B cell (primary cell): ENCODE measurements at regions of chr6 and their contacts with region 1.

Region 1: DNA sequence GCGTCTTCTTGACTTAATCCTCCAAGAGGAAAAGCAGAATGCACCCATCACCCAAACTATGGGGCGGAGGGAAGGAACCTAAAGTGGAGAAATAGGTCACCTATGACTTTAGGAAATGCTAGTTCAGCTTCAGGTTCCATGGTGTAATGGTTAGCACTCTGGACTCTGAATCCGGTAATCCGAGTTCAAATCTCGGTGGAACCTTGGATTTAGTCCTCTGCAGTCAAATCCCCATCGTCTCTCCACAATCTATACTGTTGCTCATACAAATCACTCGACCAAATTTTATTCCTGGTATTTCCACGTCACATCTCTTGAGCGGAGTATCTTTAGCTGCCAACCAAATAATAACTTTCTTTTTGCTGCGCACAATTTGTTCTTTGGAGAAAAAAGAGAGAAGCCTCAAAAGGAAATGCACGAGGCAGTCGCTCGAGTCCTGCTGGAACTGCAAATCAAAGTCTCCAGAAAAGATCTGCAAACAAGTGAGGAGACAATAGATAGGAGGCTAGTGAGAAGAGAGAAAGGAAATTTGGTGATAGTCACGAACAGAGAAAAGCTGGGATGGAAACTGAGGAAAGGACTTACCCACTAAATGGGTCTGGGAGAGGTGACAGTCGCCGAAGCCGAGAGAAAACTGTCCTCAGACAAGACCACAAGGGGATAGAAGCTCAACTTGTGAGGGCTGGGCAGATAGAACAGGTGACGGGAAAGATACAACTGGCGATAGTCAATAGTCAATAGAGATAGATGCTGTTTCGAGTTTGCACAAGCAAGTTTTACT is 16.6 kb downstream of the POM121L2 start:
- DNase-seq: no peak
- ATAC-seq: no peak
- H3K4me3 ChIP-seq: no peak overlapping the region
- H3K4me3 Mint-ChIP-seq: no peak overlapping the region
- H3K27ac ChIP-seq: no peak overlapping the region
- H3K27ac Mint-ChIP-seq: peak overlapping the region; percentile 60
- H3K4me1 ChIP-seq: no peaks in the 10 kb centered on the region
- H3K4me1 Mint-ChIP-seq: no peaks in the 10 kb centered on the region
- H3K27me3 ChIP-seq: peaks cover 2 to 73% (median 72%) of the 10 kb centered on the region in 4 experiments
- H3K27me3 Mint-ChIP-seq: peaks cover 87% of the 10 kb centered on the region
- CTCF ChIP-seq: no peak

Region 2: DNA sequence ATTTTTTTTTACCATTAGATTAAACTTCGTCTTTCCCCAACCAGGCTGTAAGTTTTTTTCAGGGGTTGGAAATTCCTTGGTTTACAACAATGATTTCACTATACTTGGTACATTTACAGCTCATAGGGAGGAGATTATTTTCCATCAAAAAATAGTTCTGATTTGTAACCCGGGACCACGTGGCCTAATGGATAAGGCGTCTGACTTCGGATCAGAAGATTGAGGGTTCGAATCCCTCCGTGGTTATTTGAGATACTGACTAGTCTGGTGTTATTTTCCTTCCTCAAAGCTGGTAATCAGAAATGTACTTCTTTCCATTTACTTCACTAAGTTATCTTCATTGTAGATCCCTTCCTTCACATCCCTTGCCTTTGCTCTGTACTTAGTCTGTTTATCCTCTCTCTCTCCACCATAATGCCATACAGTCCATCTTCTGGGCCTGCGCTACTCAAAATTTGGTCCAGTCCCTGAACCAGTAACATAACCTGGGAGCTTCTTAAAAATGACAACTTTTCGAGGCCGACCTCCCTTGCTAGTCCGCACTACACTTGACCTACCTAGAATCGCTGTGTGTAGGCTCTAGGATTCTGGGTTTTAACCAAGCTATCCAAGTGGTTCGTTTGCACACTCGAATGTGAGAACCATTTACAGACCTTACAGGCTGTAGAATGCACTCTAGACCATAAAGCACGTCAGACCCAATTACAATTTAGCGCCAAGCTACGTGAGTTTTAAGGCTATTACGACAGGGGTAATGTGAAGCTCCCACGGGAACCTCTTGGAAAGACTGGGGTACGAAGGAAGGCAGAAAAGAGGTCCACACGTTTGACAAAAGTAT is 972.6 kb before region 1 on chr6:
- CTCF ChIA-PET with region 1: no interaction called
- POLR2A ChIA-PET with region 1: no interaction called
- intact Hi-C with region 1: loop called (anchors 10 kb)
- DNase-seq: peak; percentile 83
- ATAC-seq: peak; percentile 59
- H3K4me3 ChIP-seq: peak overlapping the region in 4 of 5 experiments; percentile 49 to 74 (median 59)
- H3K4me3 Mint-ChIP-seq: peak overlapping the region; percentile 74
- H3K27ac ChIP-seq: no peak overlapping the region
- H3K27ac Mint-ChIP-seq: peak overlapping the region; percentile 70
- H3K4me1 ChIP-seq: peaks cover 14 to 31% of the 10 kb centered on the region in 2 donors
- H3K4me1 Mint-ChIP-seq: peaks cover 22% of the 10 kb centered on the region
- H3K27me3 ChIP-seq: peaks cover 0 to 43% (median 25%) of the 10 kb centered on the region in 4 experiments
- H3K27me3 Mint-ChIP-seq: peaks cover 26% of the 10 kb centered on the region
- CTCF ChIP-seq: no peak

Region 3: GRCh38 chr6:27553123-27553904 is 257.8 kb after region 1 on chr6:
- CTCF ChIA-PET with region 1: no interaction called
- POLR2A ChIA-PET with region 1: no interaction called
- intact Hi-C with region 1: loop called (anchors 5 kb)
- DNase-seq: peak; percentile 36
- ATAC-seq: no peak
- H3K4me3 ChIP-seq: no peak overlapping the region
- H3K4me3 Mint-ChIP-seq: peak overlapping the region; percentile 54
- H3K27ac ChIP-seq: no peak overlapping the region
- H3K27ac Mint-ChIP-seq: no peak overlapping the region
- H3K4me1 ChIP-seq: peaks cover 3 to 15% of the 10 kb centered on the region in 2 donors
- H3K4me1 Mint-ChIP-seq: peaks cover 10% of the 10 kb centered on the region
- H3K27me3 ChIP-seq: peaks cover 1 to 65% (median 54%) of the 10 kb centered on the region in 4 experiments
- H3K27me3 Mint-ChIP-seq: peaks cover 64% of the 10 kb centered on the region
- CTCF ChIP-seq: no peak

Region 4: DNA sequence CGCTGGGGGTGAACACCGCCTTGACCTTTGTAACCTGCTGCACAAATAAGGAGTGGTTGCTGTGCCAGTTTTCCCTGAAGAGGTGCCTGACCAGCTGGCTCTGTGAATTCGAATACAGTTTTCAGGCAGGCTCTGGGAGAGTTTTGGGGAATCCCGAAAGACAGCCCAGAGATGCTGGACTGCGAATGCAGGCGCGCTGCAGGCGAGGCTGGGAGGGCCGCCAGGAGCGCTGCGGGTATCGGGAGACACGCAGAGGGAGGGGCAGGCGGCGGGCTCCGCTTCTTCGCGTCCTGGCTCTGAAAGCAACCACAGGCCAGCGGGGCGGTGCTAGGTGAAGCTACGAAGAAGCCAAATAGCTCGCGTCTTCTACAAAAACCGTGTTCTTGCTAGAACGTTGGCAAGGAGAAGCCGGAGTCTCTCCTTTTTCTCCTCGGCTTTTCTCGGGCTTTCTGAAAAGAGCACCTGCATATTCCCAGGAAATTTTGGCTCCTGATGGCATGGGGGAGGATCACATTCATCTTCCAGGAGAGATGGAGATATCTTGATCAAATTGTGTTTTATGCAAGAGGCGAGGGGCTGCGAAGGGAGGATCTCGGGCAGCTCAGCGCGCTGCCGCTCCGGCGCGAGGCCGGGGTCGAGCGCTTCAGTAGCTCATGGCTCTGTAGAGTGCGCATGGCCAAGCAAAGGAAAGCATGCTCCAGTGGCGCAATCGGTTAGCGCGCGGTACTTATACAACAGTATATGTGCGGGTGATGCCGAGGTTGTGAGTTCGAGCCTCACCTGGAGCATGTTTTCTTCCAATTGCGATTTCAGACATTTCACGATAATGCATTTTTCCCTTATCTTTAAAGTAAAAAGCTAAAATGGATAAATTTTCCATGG is 335.5 kb after region 1 on chr6:
- CTCF ChIA-PET with region 1: no interaction called
- POLR2A ChIA-PET with region 1: no interaction called
- intact Hi-C with region 1: no loop called
- DNase-seq: no peak
- ATAC-seq: no peak
- H3K4me3 ChIP-seq: no peak overlapping the region
- H3K4me3 Mint-ChIP-seq: peak overlapping the region; percentile 59
- H3K27ac ChIP-seq: no peak overlapping the region
- H3K27ac Mint-ChIP-seq: no peak overlapping the region
- H3K4me1 ChIP-seq: peaks cover 9% of the 10 kb centered on the region in 2 donors
- H3K4me1 Mint-ChIP-seq: peaks cover 6% of the 10 kb centered on the region
- H3K27me3 ChIP-seq: peaks cover 0 to 53% (median 23%) of the 10 kb centered on the region in 4 experiments
- H3K27me3 Mint-ChIP-seq: peaks cover 66% of the 10 kb centered on the region
- CTCF ChIP-seq: no peak

Region 5: DNA sequence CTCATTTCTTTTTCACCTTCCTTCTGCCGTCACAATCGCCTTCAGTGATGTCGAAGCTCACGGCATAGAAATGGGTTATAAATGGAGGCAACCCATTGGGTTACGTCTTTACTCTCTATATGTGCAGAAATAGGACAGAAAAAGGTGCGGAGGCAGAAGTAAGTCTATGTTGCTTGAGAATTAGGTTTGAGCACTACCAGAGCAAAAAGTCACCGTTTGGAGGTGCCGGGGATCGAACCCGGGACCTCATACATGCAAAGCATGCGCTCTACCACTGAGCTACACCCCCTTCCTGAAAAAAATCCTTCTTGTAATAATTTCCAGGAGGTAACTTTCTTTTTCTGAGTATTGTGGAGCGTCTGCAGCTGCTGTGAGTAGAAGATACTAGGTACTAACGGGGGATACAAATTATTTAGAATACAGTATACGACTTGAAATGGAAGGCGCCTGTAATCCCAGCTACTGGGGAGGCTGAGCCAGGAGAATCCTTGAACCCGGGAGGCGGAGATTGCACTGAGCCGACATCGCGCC is 1494.1 kb after region 1 on chr6:
- CTCF ChIA-PET with region 1: no interaction called
- POLR2A ChIA-PET with region 1: no interaction called
- intact Hi-C with region 1: loop called (anchors 10 kb)
- DNase-seq: peak; percentile 26
- ATAC-seq: no peak
- H3K4me3 ChIP-seq: no peak overlapping the region
- H3K4me3 Mint-ChIP-seq: no peak overlapping the region
- H3K27ac ChIP-seq: no peak overlapping the region
- H3K27ac Mint-ChIP-seq: no peak overlapping the region
- H3K4me1 ChIP-seq: peaks cover 6 to 17% of the 10 kb centered on the region in 2 donors
- H3K4me1 Mint-ChIP-seq: peaks cover 8% of the 10 kb centered on the region
- H3K27me3 ChIP-seq: peaks cover 0 to 88% (median 69%) of the 10 kb centered on the region in 4 experiments
- H3K27me3 Mint-ChIP-seq: peaks cover 80% of the 10 kb centered on the region
- CTCF ChIP-seq: no peak